GM13977 (cell line): ENCODE measurements at regions of chr4 and their contacts with region 1.

Region 1: GRCh38 chr4:82890901-82891706 is at the start of gene SEC31A:
- DNase-seq: peak; percentile 92
- CTCF ChIP-seq: no peak

Region 2: DNA sequence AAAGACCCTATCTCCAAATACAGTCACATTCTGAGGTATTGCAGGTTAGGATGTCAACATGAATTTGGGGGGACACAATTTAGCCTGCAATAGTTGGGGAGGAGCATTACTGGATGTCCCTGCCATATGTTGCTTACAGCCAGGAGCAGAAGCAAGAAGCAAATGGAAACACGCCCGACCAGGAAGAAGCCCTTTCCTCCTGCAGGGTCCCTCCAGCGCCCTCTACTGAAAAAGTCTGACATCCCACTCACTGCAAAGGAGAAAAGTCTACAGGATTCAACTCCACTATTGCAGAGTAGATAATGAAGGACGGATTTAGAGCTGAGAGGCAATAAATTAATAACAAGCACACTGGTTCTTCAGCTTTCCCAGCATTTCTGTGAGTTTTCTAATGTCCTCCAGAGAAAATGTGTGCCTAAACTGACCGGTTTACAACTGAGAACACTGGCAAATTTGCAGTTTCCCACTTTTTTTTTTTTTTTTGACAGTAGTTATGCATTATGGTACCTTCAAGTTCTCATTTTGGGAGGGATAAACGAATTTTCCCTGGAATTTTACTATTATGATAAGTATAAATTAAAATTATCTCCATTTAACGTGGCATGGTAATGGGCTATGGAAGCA is 361.8 kb after region 1 on chr4:
- in situ Hi-C with region 1: loop called (anchors 25 kb)
- DNase-seq: peak; percentile 60
- CTCF ChIP-seq: peak; percentile 77